ENCODE measurements at regions of chr11 and their contacts with region 1.

Region 1: GRCh38 chr11:128116885-128117284 is 470.5 kb downstream of the ETS1 start:
- DNase-seq: no peak
- ATAC-seq: no peak
- H3K4me3 ChIP-seq: peak overlapping the region in 1 of 4 donors; percentile 28
- H3K27ac ChIP-seq: no peak overlapping the region
- H3K4me1 ChIP-seq: no peaks in the 10 kb centered on the region
- H3K27me3 ChIP-seq: no peaks in the 10 kb centered on the region
- CTCF ChIP-seq: no peak
- POLR2A ChIP-seq: no peak

Region 2: DNA sequence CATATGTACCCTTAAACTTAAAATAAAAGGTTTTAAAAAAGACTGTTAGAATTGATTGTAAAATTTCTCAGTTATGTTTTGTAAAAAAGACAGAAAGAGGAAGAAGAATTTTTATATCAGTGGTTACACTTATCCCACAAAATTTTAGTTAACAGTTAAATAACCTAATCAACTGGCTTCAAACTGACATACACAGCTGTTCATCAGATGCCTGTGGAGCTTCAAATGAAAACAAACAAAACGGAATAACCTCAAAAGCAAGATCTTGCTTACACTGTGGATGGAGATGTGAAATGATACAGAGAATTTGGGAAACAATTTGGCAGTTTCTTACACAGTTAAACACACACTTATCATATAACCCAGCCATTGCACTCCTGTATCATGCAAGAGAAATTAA is 50.5 kb before region 1 on chr11:
- in situ Hi-C with region 1: no loop called
- intact Hi-C with region 1: no loop called
- DNase-seq: no peak
- ATAC-seq: no peak
- H3K4me3 ChIP-seq: no peak overlapping the region
- H3K27ac ChIP-seq: no peak overlapping the region
- H3K4me1 ChIP-seq: no peaks in the 10 kb centered on the region
- H3K27me3 ChIP-seq: no peaks in the 10 kb centered on the region
- CTCF ChIP-seq: no peak
- POLR2A ChIP-seq: no peak

Region 3: DNA sequence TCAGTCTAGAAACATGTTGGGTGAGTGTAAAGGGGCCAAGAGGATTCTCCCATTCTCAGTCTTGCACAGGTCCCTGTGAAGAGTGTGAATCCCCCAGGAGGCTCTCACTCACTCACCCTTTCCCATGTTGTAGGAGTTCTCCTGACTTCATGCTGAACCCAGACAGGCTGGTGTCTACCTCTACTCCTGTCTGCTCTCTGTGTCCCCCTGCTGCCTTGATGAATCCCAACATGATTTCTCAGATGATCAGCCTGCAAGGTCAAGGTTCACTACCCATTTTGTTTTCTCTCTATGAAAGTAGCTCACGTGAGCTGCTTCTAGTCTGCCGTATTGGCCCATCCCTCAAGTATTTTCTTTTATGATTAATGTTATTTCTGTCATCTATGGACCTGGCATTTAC is 30.1 kb before region 1 on chr11:
- in situ Hi-C with region 1: no loop called
- intact Hi-C with region 1: loop called (anchors 1 kb)
- DNase-seq: no peak
- ATAC-seq: no peak
- H3K4me3 ChIP-seq: no peak overlapping the region
- H3K27ac ChIP-seq: no peak overlapping the region
- H3K4me1 ChIP-seq: no peaks in the 10 kb centered on the region
- H3K27me3 ChIP-seq: no peaks in the 10 kb centered on the region
- CTCF ChIP-seq: no peak
- POLR2A ChIP-seq: no peak